Posterior vena cava (tissue), 2 donors: ENCODE measurements at regions of chr12 and their contacts with region 1.

Region 1: DNA sequence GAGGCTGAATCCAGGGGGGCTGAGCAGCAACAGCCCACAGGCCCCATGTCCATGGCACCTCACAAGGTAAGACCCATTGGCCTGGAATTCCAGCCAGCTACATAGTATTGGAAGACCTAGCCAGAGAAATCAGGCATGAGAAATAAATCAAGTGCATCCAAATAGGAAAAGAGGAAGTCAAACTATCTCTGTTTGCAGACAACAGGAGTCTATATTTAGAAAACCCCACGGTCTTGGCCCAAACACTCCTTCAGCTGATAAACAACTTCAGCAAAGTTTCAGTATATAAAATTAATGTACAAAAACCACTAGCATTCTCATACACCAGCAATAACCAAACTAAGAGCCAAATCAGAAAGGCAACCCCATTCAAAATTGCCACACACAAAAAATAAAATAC is 16.9 kb downstream of the PDE6H start:
- DNase-seq: no peak

Region 2: GRCh38 chr12:14937689-14938088 is 52.1 kb before region 1 on chr12:
- intact Hi-C with region 1: loop called in 1 of 2 experiments (anchors 10 kb)
- DNase-seq: no peak